ENCODE measurements at regions of chr3 and their contacts with region 1.

Region 1: GRCh38 chr3:195259475-195260279 is 11.3 kb downstream of the XXYLT1 start:
- DNase-seq: peak; percentile 69
- ATAC-seq: peak; percentile 85
- H3K4me3 ChIP-seq: peak overlapping the region; percentile 77; the same call in 1 of the 2 replicates
- H3K27ac ChIP-seq: peak overlapping the region; percentile 85
- H3K4me1 ChIP-seq: peaks cover 21% of the 10 kb centered on the region
- H3K27me3 ChIP-seq: no peaks in the 10 kb centered on the region
- CTCF ChIP-seq: peak; percentile 54 to 77 (median 54); a peak in 5 of 6 replicates
- EP300 ChIP-seq: peak; percentile 64 to 82; a peak in 3 of 4 replicates
- POLR2A ChIP-seq: peak; percentile 85
- RAD21 ChIP-seq: peak; percentile 89

Region 2: DNA sequence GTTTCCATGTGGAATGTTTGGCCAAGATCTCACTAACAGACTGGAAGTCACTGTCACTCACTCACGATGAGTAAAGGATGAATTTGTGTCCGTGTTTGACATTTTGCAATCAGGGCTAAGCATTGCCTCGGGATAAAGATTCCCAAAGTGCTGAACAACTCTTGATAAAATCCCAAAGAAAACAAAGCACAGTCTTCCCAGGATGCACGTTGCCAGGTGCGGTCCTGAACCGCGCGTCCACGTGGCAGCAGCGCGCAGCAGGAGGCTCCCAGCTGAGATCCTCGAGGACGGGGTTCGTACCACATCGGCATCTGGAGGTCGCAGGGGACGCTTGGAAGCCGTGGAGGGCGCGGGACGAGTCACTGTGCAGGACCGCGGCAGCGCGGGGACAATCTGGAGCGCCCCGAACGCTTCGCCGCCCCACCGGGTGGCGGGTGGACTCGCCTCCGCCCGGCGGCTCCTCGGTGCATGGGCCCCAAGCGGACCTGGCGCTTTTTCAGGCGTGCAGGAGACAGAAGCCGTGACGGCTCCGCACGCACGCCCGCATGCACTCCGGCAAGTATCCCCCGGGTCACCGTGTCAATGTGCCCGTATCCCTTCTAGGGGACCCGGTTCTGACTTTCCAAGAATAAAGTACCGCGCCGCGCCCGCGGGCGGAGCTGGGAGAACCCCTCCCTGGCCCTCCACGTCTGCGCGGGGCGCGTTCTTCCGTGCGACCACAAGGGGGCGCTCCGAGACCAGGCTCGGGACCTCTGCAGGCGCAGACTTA is 926.3 kb before region 1 on chr3:
- CTCF ChIA-PET with region 1: no interaction called
- POLR2A ChIA-PET with region 1: no interaction called
- RAD21 ChIA-PET with region 1: no interaction called
- SMC1A ChIA-PET with region 1: no interaction called
- in situ Hi-C with region 1: loop called (anchors 10 kb)
- intact Hi-C with region 1: loop called (anchors 10 kb)
- DNase-seq: no peak
- ATAC-seq: peak; percentile 99
- H3K4me3 ChIP-seq: peak overlapping the region; percentile 49; the same call in 1 of the 2 replicates
- H3K27ac ChIP-seq: no peak overlapping the region
- H3K4me1 ChIP-seq: no peaks in the 10 kb centered on the region
- H3K27me3 ChIP-seq: peaks cover 0 to 7% of the 10 kb centered on the region in 2 experiments; a peak in 3 of 4 replicates
- CTCF ChIP-seq: peak; percentile 95 to 99 (median 97); a peak in 5 of 6 replicates
- EP300 ChIP-seq: no peak
- POLR2A ChIP-seq: no peak
- RAD21 ChIP-seq: peak; percentile 96

Region 3: DNA sequence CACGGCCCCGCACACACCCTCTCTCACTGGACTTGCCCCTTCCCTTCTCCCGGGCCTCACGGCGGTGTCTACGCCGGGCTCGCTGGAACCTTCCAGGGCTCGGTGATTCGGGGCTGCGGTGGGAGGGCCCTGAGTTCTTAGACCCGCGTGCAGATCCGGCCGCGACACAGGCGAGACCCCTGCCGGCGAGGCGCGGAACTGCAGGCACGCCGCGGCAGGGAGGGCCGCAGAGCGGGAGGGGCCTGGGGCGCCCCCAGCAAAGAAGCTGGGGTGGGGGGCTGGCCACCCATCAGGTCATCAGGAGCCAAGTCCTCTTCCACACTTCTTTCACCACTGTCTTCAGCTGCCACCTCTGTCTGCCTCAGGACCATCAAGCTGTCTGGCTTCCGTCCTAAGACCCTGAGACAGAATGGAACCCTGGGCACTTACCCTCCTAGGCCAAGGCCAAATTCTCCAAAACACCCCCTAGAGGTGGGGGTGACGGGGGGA is 153.2 kb before region 1 on chr3:
- CTCF ChIA-PET with region 1: interaction called, 6 read pairs
- POLR2A ChIA-PET with region 1: interaction called, 4 read pairs
- RAD21 ChIA-PET with region 1: interaction called, 3 read pairs
- SMC1A ChIA-PET with region 1: interaction called, 3 read pairs
- in situ Hi-C with region 1: no loop called
- intact Hi-C with region 1: loop called (anchors 1 kb)
- DNase-seq: no peak
- ATAC-seq: peak; percentile 99
- H3K4me3 ChIP-seq: no peak overlapping the region
- H3K27ac ChIP-seq: no peak overlapping the region
- H3K4me1 ChIP-seq: no peaks in the 10 kb centered on the region; the same call in 1 of the 2 replicates
- H3K27me3 ChIP-seq: no peaks in the 10 kb centered on the region
- CTCF ChIP-seq: peak; percentile 92 to 99 (median 95)
- EP300 ChIP-seq: no peak
- POLR2A ChIP-seq: no peak
- RAD21 ChIP-seq: peak; percentile 93

Region 4: DNA sequence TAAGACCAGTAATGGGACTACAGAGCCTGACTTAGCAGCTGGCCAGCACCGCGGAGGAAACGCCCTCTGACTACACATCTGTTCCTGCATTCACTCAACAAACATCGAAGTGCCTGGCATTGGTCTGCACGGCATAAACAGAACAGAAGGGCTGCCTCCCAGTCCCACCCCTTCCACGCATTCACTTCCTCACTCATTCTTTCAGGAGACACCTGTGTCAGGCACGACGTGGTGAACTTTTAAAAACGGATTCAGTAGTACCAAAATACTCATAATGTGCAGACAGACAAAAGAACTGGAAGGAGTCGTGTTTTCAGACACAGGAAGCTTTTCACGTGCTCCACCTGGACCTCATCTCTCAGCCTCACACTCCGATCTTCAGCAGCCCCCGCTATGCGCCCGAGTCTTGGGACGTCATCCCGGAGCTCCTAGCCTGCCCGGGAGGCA is 112.0 kb before region 1 on chr3:
- CTCF ChIA-PET with region 1: interaction called, 3 read pairs
- POLR2A ChIA-PET with region 1: interaction called, 4 read pairs
- RAD21 ChIA-PET with region 1: interaction called, 14 read pairs
- SMC1A ChIA-PET with region 1: interaction called, 8 read pairs
- in situ Hi-C with region 1: loop called (anchors 5 kb)
- intact Hi-C with region 1: loop called (anchors 2 kb)
- DNase-seq: peak; percentile 91
- ATAC-seq: peak; percentile 83
- H3K4me3 ChIP-seq: peak overlapping the region; percentile 93
- H3K27ac ChIP-seq: peak overlapping the region; percentile 91
- H3K4me1 ChIP-seq: peaks cover 46% of the 10 kb centered on the region
- H3K27me3 ChIP-seq: no peaks in the 10 kb centered on the region
- CTCF ChIP-seq: no peak
- EP300 ChIP-seq: no peak
- POLR2A ChIP-seq: peak; percentile 79
- RAD21 ChIP-seq: no peak

Region 5: DNA sequence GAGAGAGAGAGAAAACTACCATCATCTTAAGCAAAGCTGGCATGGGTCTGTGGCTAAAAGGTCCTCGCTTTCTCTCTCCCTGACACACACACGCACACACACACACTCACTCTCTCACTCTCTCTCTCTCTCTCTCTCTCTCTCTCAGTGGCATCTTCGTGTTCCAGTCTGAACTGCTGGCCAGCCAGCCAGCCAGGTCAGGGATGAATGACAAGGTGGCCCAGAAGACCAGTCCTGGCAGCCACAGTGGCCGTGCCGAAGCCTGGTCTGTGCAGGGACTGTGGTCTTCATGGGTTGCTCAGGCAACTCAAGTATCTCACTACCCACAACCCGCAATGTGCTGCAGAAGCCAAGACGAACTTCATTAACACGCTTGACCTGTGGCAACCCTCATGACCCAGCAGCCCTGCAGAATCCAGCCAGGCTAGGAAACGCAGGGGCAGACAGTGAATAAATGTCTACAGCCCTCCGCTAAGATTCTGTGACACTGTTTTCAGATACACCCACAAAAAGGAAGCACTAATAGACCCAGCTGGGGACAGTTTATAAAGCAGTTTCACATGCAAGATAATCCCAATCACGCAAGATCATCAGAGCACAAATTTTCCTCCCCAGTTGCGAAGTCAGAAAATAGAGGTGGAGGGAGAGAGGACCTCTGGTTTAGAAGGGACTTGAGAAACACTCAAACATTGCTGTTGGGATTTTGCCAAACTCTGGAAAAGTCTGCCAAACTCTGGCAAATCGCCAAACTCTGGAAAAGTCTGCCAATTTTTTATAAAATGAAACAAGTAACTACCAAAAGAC is 55.1 kb before region 1 on chr3:
- CTCF ChIA-PET with region 1: no interaction called
- POLR2A ChIA-PET with region 1: interaction called, 4 read pairs
- RAD21 ChIA-PET with region 1: interaction called, 5 read pairs
- SMC1A ChIA-PET with region 1: interaction called, 9 read pairs
- in situ Hi-C with region 1: no loop called
- intact Hi-C with region 1: loop called (anchors 2 kb)
- DNase-seq: peak; percentile 38
- ATAC-seq: peak; percentile 66
- H3K4me3 ChIP-seq: no peak overlapping the region
- H3K27ac ChIP-seq: peak overlapping the region; percentile 15
- H3K4me1 ChIP-seq: peaks cover 43% of the 10 kb centered on the region
- H3K27me3 ChIP-seq: no peaks in the 10 kb centered on the region
- CTCF ChIP-seq: no peak
- EP300 ChIP-seq: no peak
- POLR2A ChIP-seq: no peak
- RAD21 ChIP-seq: no peak

Region 6: GRCh38 chr3:195282961-195283360 is 23.3 kb after region 1 on chr3:
- CTCF ChIA-PET with region 1: no interaction called
- POLR2A ChIA-PET with region 1: no interaction called
- RAD21 ChIA-PET with region 1: no interaction called
- SMC1A ChIA-PET with region 1: no interaction called
- in situ Hi-C with region 1: no loop called
- intact Hi-C with region 1: no loop called
- DNase-seq: no peak
- ATAC-seq: no peak
- H3K4me3 ChIP-seq: no peak overlapping the region
- H3K27ac ChIP-seq: no peak overlapping the region
- H3K4me1 ChIP-seq: no peaks in the 10 kb centered on the region
- H3K27me3 ChIP-seq: no peaks in the 10 kb centered on the region
- CTCF ChIP-seq: no peak
- EP300 ChIP-seq: no peak
- POLR2A ChIP-seq: no peak
- RAD21 ChIP-seq: no peak

Region 7: DNA sequence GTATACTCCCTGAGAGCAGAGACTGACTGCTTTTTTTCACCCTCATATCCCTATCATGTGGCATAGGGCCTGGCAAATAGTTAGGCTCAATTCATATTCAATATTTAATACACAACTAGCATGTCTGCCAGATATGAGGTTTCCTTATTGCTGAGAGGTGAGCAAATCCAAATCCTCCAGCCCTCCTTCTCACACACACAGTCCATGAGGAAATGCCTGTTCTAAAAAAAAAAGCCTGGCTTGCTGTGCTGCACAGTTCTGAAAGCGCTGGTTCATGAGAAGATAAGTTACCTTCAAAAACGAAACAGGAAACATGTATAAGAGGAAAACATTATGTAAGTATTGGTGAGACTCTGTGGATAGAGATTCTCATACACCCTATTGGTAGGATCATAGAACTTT is 198.6 kb after region 1 on chr3:
- CTCF ChIA-PET with region 1: no interaction called
- POLR2A ChIA-PET with region 1: no interaction called
- RAD21 ChIA-PET with region 1: no interaction called
- SMC1A ChIA-PET with region 1: no interaction called
- in situ Hi-C with region 1: no loop called
- intact Hi-C with region 1: no loop called
- DNase-seq: no peak
- ATAC-seq: peak; percentile 90
- H3K4me3 ChIP-seq: no peak overlapping the region
- H3K27ac ChIP-seq: no peak overlapping the region; the same call in 1 of the 2 replicates
- H3K4me1 ChIP-seq: peaks cover 8% of the 10 kb centered on the region
- H3K27me3 ChIP-seq: no peaks in the 10 kb centered on the region
- CTCF ChIP-seq: no peak
- EP300 ChIP-seq: no peak
- POLR2A ChIP-seq: no peak
- RAD21 ChIP-seq: no peak; the same call in 1 of the 2 replicates

Measured in GM12878 (cell line).